ENCODE measurements at regions of chr12 and their contacts with region 1.

Region 1: GRCh38 chr12:21657326-21658077 is at the start of gene LDHB:
- DNase-seq: peak; percentile 69 to 96 (median 91)
- ATAC-seq: peak; percentile 98
- H3K4me3 ChIP-seq: peak within 1 kb of the TSS; percentile 89
- H3K4me3 Mint-ChIP-seq: peak within 1 kb of the TSS; percentile 89 to 100 (median 97)
- H3K27ac ChIP-seq: peak within 1 kb of the TSS; percentile 83
- H3K27ac Mint-ChIP-seq: peak within 1 kb of the TSS; percentile 86 to 100 (median 95)
- H3K4me1 ChIP-seq: peaks cover 25 to 47% of the 10 kb centered on the region in 2 donors
- H3K4me1 Mint-ChIP-seq: peaks cover 36 to 70% (median 61%) of the 10 kb centered on the region in 7 donors
- H3K27me3 ChIP-seq: no peaks in the 10 kb centered on the region
- H3K27me3 Mint-ChIP-seq: peaks cover 0 to 8% (median 0%) of the 10 kb centered on the region in 5 donors
- total RNA-seq, gene LDHB: 630 to 1,306 (median 1,079) TPM

Region 2: GRCh38 chr12:21451529-21451928 is 206.0 kb before region 1 on chr12:
- CTCF ChIA-PET with region 1: interaction called, 3 read pairs
- POLR2A ChIA-PET with region 1: interaction called, 5 read pairs
- intact Hi-C with region 1: loop called (anchors 1 kb)
- DNase-seq: no peak
- ATAC-seq: no peak
- H3K4me3 ChIP-seq: no peak overlapping the region
- H3K4me3 Mint-ChIP-seq: no peak overlapping the region
- H3K27ac ChIP-seq: no peak overlapping the region
- H3K27ac Mint-ChIP-seq: peak overlapping the region in 4 of 9 donors; percentile 6 to 51 (median 28)
- H3K4me1 ChIP-seq: peaks cover 2 to 21% of the 10 kb centered on the region in 2 donors
- H3K4me1 Mint-ChIP-seq: peaks cover 2 to 48% (median 29%) of the 10 kb centered on the region in 7 donors
- H3K27me3 ChIP-seq: no peaks in the 10 kb centered on the region
- H3K27me3 Mint-ChIP-seq: no peaks in the 10 kb centered on the region

Region 3: GRCh38 chr12:21607701-21608100 is 49.8 kb before region 1 on chr12:
- CTCF ChIA-PET with region 1: interaction called, 10 read pairs
- POLR2A ChIA-PET with region 1: interaction called, 87 read pairs
- intact Hi-C with region 1: loop called in 1 of 2 experiments (anchors 1 kb)
- DNase-seq: peak in 6 of 9 donors; percentile 14 to 57 (median 43)
- ATAC-seq: no peak
- H3K4me3 ChIP-seq: no peak overlapping the region
- H3K4me3 Mint-ChIP-seq: no peak overlapping the region
- H3K27ac ChIP-seq: no peak overlapping the region
- H3K27ac Mint-ChIP-seq: no peak overlapping the region
- H3K4me1 ChIP-seq: peaks cover 0 to 10% of the 10 kb centered on the region in 2 donors
- H3K4me1 Mint-ChIP-seq: peaks cover 2 to 8% (median 7%) of the 10 kb centered on the region in 7 donors
- H3K27me3 ChIP-seq: no peaks in the 10 kb centered on the region
- H3K27me3 Mint-ChIP-seq: peaks cover 0 to 7% (median 0%) of the 10 kb centered on the region in 5 donors

Region 4: GRCh38 chr12:21642707-21643389 is 14.7 kb before region 1 on chr12:
- CTCF ChIA-PET with region 1: interaction called, 5 read pairs
- POLR2A ChIA-PET with region 1: interaction called, 44 read pairs
- intact Hi-C with region 1: loop called (anchors 1 kb)
- DNase-seq: no peak
- ATAC-seq: no peak
- H3K4me3 ChIP-seq: no peak overlapping the region
- H3K4me3 Mint-ChIP-seq: peak overlapping the region in 8 of 10 donors; percentile 12 to 89 (median 44)
- H3K27ac ChIP-seq: peak overlapping the region; percentile 47
- H3K27ac Mint-ChIP-seq: peak overlapping the region in 8 of 9 donors; percentile 8 to 89 (median 76)
- H3K4me1 ChIP-seq: peaks cover 11 to 64% of the 10 kb centered on the region in 2 donors
- H3K4me1 Mint-ChIP-seq: peaks cover 53 to 98% (median 91%) of the 10 kb centered on the region in 7 donors
- H3K27me3 ChIP-seq: no peaks in the 10 kb centered on the region
- H3K27me3 Mint-ChIP-seq: no peaks in the 10 kb centered on the region

Region 5: GRCh38 chr12:21683115-21683514 is 25.6 kb after region 1 on chr12:
- CTCF ChIA-PET with region 1: interaction called, 25 read pairs
- POLR2A ChIA-PET with region 1: interaction called, 242 read pairs
- intact Hi-C with region 1: loop called in 1 of 2 experiments (anchors 1 kb)
- DNase-seq: no peak
- ATAC-seq: no peak
- H3K4me3 ChIP-seq: no peak overlapping the region
- H3K4me3 Mint-ChIP-seq: no peak overlapping the region
- H3K27ac ChIP-seq: no peak overlapping the region
- H3K27ac Mint-ChIP-seq: peak overlapping the region in 1 of 9 donors; percentile 37
- H3K4me1 ChIP-seq: peaks cover 0 to 24% of the 10 kb centered on the region in 2 donors
- H3K4me1 Mint-ChIP-seq: peaks cover 9 to 25% (median 20%) of the 10 kb centered on the region in 7 donors
- H3K27me3 ChIP-seq: no peaks in the 10 kb centered on the region
- H3K27me3 Mint-ChIP-seq: peaks cover 0 to 8% (median 0%) of the 10 kb centered on the region in 5 donors

Region 6: GRCh38 chr12:22105542-22105941 is 448.0 kb after region 1 on chr12:
- CTCF ChIA-PET with region 1: no interaction called
- POLR2A ChIA-PET with region 1: no interaction called
- intact Hi-C with region 1: no loop called
- DNase-seq: no peak
- ATAC-seq: no peak
- H3K4me3 ChIP-seq: no peak overlapping the region
- H3K4me3 Mint-ChIP-seq: no peak overlapping the region
- H3K27ac ChIP-seq: no peak overlapping the region
- H3K27ac Mint-ChIP-seq: no peak overlapping the region
- H3K4me1 ChIP-seq: peaks cover 0 to 11% of the 10 kb centered on the region in 2 donors
- H3K4me1 Mint-ChIP-seq: peaks cover 4 to 38% (median 28%) of the 10 kb centered on the region in 7 donors
- H3K27me3 ChIP-seq: no peaks in the 10 kb centered on the region
- H3K27me3 Mint-ChIP-seq: no peaks in the 10 kb centered on the region

Region 7: DNA sequence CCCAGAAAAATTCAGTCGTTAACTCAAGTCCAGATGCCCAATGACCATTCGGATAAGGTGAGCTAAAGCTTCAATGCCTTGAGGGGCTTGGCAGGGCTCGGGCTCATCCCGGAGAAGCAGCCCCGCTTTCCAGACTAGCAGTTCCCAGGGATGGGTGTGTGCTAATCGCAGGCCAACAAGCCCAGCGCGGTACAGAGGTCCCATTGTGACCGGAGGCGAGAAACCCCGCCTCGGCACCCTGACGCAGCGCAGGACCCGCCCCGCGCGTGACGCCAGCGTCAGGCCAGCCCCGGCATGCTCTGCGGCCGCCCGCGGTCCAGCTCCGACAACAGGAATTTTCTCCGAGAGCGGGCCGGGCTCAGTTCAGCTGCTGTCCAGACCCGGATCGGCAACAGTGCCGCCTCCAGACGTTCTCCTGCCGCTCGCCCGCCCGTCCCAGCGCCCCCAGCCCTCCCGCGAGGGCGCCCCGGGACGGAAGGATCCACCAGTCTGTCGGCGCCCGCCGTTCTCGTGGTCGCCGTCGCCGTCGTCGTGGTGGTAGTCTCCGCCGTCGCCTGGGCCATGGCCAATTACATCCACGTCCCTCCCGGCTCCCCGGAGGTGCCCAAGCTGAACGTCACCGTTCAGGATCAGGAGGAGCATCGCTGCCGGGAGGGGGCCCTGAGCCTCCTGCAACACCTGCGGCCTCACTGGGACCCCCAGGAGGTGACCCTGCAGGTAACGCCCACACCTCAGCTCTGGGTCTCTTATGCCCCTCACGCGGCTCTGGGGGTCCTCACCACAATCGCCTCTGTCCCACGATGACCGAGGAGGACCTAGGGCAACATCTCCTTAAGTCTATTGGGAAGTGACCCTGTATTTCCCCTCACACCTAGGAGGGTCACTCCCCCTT is 967.6 kb after region 1 on chr12 and contains the start of gene ETNK1:
- CTCF ChIA-PET with region 1: no interaction called
- POLR2A ChIA-PET with region 1: interaction called, 4 read pairs
- intact Hi-C with region 1: loop called (anchors 1 to 5 kb)
- DNase-seq: peak; percentile 72 to 88 (median 77)
- ATAC-seq: peak; percentile 99
- H3K4me3 ChIP-seq: peak within 1 kb of the TSS; percentile 80
- H3K4me3 Mint-ChIP-seq: peak within 1 kb of the TSS; percentile 85 to 100 (median 96)
- H3K27ac ChIP-seq: peak within 1 kb of the TSS; percentile 88
- H3K27ac Mint-ChIP-seq: peak within 1 kb of the TSS; percentile 84 to 99 (median 97)
- H3K4me1 ChIP-seq: peaks cover 17 to 20% of the 10 kb centered on the region in 2 donors
- H3K4me1 Mint-ChIP-seq: peaks cover 23 to 50% (median 45%) of the 10 kb centered on the region in 7 donors
- H3K27me3 ChIP-seq: no peaks in the 10 kb centered on the region
- H3K27me3 Mint-ChIP-seq: peaks cover 0 to 25% (median 9%) of the 10 kb centered on the region in 5 donors
- total RNA-seq, gene ETNK1: 43.7 to 88.6 (median 77.9) TPM

Measured in naive thymus-derived CD4-positive, alpha-beta T cell (primary cell).